ENCODE measurements at regions of chr18 and their contacts with region 1.

Region 1: GRCh38 chr18:49690307-49690706 is 123.0 kb downstream of the ACAA2 start:
- DNase-seq: no peak
- H3K4me3 Mint-ChIP-seq: no peak overlapping the region
- H3K27ac Mint-ChIP-seq: peak overlapping the region; percentile 20
- H3K4me1 Mint-ChIP-seq: peaks cover 23% of the 10 kb centered on the region
- H3K27me3 Mint-ChIP-seq: no peaks in the 10 kb centered on the region
- CTCF ChIP-seq: no peak

Region 2: GRCh38 chr18:49476664-49477411 is 213.5 kb before region 1 on chr18:
- CTCF ChIA-PET with region 1: interaction called, 10 read pairs
- intact Hi-C with region 1: no loop called
- DNase-seq: no peak
- H3K4me3 Mint-ChIP-seq: no peak overlapping the region
- H3K27ac Mint-ChIP-seq: peak overlapping the region; percentile 72
- H3K4me1 Mint-ChIP-seq: no peaks in the 10 kb centered on the region
- H3K27me3 Mint-ChIP-seq: no peaks in the 10 kb centered on the region
- CTCF ChIP-seq: no peak

Region 3: DNA sequence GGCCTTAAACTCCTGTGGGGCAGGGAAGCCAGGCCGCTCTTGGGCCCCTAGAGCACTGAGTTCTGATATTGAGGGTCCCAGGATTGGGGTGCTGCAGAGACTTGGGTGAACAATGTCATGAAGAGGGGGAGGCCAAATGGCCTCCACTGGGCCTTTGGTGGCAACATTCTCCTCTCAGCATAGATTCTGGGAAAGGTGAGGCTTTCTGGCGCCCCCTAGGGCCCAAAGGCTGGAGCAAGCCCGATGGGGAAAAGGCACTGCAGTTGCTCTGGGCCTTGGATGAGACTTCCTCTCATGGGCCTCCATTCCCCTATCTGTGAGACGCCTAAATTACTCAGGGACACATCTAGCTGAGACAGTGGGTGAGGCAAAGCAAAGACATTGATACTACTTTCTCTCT is 38.2 kb after region 1 on chr18:
- CTCF ChIA-PET with region 1: no interaction called
- intact Hi-C with region 1: loop called (anchors 2 kb)
- DNase-seq: peak; percentile 70
- H3K4me3 Mint-ChIP-seq: no peak overlapping the region
- H3K27ac Mint-ChIP-seq: no peak overlapping the region
- H3K4me1 Mint-ChIP-seq: peaks cover 44% of the 10 kb centered on the region
- H3K27me3 Mint-ChIP-seq: no peaks in the 10 kb centered on the region
- CTCF ChIP-seq: no peak

Measured in Calu3 (cell line).